ENCODE measurements at regions of chr12 and their contacts with region 1.

Region 1: DNA sequence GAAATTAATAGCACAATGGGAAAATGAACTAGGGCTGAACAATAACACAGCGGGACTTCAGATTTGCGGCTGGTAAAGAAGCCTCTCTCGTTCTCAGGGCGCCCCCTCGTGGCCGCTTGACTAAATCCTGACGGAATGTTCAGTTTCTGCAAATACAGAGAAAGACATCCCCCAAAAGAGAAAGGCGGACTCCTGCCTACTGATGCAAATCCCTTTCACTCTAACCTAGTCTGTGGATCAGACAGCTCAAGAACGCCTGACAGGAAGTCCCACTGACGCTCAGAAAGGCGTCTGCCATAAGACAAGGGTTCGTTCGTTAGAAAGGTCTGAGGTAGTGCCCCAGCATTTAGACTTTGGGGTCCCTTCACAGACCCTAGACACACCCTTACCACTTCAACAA is 2.5 kb downstream of the NUAK1 start:
- DNase-seq: peak; percentile 89
- ATAC-seq: peak; percentile 44
- H3K4me3 Mint-ChIP-seq: no peak overlapping the region
- H3K27ac Mint-ChIP-seq: no peak overlapping the region
- H3K4me1 Mint-ChIP-seq: peaks cover 9% of the 10 kb centered on the region
- H3K27me3 Mint-ChIP-seq: peaks cover 48% of the 10 kb centered on the region
- CTCF ChIP-seq: peak; percentile 81

Region 2: GRCh38 chr12:105420659-105421240 is 715.5 kb before region 1 on chr12:
- CTCF ChIA-PET with region 1: interaction called, 54 read pairs
- POLR2A ChIA-PET with region 1: no interaction called
- intact Hi-C with region 1: loop called (anchors 2 kb)
- DNase-seq: peak; percentile 77
- ATAC-seq: peak; percentile 76
- H3K4me3 Mint-ChIP-seq: no peak overlapping the region
- H3K27ac Mint-ChIP-seq: no peak overlapping the region
- H3K4me1 Mint-ChIP-seq: peaks cover 11% of the 10 kb centered on the region
- H3K27me3 Mint-ChIP-seq: no peaks in the 10 kb centered on the region
- CTCF ChIP-seq: peak; percentile 89

Region 3: GRCh38 chr12:105705765-105706164 is 430.5 kb before region 1 on chr12:
- CTCF ChIA-PET with region 1: interaction called, 11 read pairs
- POLR2A ChIA-PET with region 1: no interaction called
- intact Hi-C with region 1: no loop called
- DNase-seq: peak; percentile 36
- ATAC-seq: no peak
- H3K4me3 Mint-ChIP-seq: no peak overlapping the region
- H3K27ac Mint-ChIP-seq: no peak overlapping the region
- H3K4me1 Mint-ChIP-seq: no peaks in the 10 kb centered on the region
- H3K27me3 Mint-ChIP-seq: no peaks in the 10 kb centered on the region
- CTCF ChIP-seq: peak; percentile 71

Region 4: DNA sequence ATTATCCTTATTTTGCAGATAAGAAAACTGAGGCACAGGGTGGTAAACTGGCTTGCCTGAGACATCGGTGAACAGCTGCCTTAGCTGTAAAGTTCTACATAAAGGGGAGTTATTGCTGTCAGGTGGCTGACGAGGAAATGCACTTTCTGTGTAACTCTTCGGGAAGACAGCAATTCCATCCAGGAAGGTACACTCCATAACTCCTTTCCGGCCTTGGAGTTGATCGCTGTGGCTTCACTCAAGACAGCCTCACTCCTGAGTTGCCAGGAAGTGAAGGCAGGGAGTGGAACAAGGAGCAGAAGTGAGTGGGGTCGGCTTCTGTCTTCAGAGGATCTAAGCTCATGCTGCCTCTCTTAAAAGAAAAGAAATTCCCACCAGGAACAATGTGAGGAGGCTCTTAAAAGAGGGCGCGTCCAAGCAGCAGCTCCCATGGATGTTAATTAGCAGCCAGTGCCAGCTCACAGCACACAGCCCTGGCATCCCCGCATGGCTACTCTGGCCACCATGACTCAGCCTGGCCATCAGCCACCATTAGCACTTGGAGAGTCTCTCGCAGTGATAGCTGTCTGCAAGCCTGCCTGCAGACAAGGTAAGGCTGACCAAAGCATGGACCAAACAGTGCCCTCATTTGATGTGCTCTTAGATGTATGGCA is 57.8 kb before region 1 on chr12:
- CTCF ChIA-PET with region 1: interaction called, 10 read pairs
- POLR2A ChIA-PET with region 1: no interaction called
- intact Hi-C with region 1: no loop called
- DNase-seq: no peak
- ATAC-seq: no peak
- H3K4me3 Mint-ChIP-seq: no peak overlapping the region
- H3K27ac Mint-ChIP-seq: no peak overlapping the region
- H3K4me1 Mint-ChIP-seq: no peaks in the 10 kb centered on the region
- H3K27me3 Mint-ChIP-seq: peaks cover 20% of the 10 kb centered on the region
- CTCF ChIP-seq: no peak

Region 5: DNA sequence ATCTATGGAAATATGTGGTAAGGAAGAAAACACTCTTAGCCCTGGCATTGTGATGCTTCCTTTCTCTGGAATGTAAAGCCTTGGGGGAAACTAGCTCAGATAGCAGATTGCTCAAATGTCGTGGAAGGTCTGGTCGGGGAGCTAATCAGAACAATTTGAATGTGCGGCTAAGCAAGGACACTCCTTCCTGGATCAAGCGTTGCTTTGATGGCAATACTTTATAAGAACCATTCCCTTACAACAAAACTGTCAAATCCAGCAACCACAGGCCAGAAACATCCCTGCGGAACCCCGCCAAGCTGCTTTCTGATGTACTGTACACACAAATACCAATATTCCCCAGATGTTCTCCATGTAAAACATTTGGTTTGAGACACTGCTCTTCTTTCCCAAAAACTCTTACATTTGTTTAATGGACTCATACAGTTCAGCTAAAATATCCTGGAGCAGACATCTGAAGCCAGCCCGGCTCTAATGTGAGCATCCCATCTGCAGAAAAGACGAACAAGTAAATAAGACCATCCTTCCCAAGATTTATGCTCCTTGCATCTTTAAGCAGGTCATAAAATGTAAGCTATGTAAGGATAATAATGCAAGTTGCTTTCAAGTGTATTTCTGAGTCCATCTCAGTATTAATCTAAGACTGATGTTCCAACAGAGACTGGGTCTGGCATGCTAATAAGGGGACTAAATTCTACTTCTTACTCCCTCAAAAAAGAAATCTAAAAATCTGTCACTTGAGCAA is 17.7 kb before region 1 on chr12:
- CTCF ChIA-PET with region 1: interaction called, 14 read pairs
- POLR2A ChIA-PET with region 1: no interaction called
- intact Hi-C with region 1: no loop called
- DNase-seq: no peak
- ATAC-seq: no peak
- H3K4me3 Mint-ChIP-seq: no peak overlapping the region
- H3K27ac Mint-ChIP-seq: no peak overlapping the region
- H3K4me1 Mint-ChIP-seq: no peaks in the 10 kb centered on the region
- H3K27me3 Mint-ChIP-seq: peaks cover 11% of the 10 kb centered on the region
- CTCF ChIP-seq: no peak

Region 6: DNA sequence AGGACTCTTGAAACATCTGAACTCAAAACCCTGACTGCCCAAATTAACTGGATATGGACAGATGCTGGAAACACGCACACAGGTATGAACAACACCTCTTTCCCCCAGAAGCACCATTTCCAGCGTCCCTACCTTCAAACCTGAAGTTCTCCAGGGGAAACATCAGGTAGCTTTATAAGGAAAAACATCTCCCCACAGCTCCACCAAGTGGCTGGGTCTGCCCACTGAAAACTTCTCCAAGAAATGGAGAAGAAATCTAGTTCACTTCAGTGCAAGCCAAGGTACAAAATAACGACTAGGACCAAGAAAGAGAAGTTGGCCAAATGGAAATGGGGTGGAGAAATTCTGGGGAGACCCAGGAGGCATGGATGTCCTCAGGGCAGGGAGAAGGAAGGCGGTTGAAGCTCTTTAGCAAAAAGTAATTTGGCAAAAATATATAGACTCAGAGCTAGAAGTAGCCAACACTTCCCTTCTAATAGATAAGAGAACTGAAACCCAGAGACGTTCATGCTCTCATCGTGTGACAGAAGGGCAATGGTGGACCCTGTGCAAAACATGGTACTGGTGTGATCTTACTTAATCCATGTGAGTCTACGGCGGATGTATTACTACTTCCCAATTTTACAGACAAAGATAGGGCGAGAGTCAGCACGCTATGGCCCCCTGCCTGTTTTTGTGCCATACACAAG is 13.0 kb after region 1 on chr12:
- CTCF ChIA-PET with region 1: interaction called, 40 read pairs
- POLR2A ChIA-PET with region 1: no interaction called
- intact Hi-C with region 1: no loop called
- DNase-seq: peak; percentile 8
- ATAC-seq: no peak
- H3K4me3 Mint-ChIP-seq: no peak overlapping the region
- H3K27ac Mint-ChIP-seq: no peak overlapping the region
- H3K4me1 Mint-ChIP-seq: no peaks in the 10 kb centered on the region
- H3K27me3 Mint-ChIP-seq: peaks cover 23% of the 10 kb centered on the region
- CTCF ChIP-seq: peak; percentile 28